GM12878 (cell line): ENCODE measurements at regions of chr1 and their contacts with region 1.

Region 1: GRCh38 chr1:178055779-178056471 is 38.0 kb upstream of the RASAL2 start:
- DNase-seq: peak; percentile 32
- ATAC-seq: peak; percentile 97
- H3K4me3 ChIP-seq: no peak overlapping the region; the same call in 1 of the 2 replicates
- H3K27ac ChIP-seq: 0 out of 2 replicates have a peak overlapping the region, but pooled peaks have one; percentile 38
- H3K4me1 ChIP-seq: peaks cover 9% of the 10 kb centered on the region
- H3K27me3 ChIP-seq: no peaks in the 10 kb centered on the region; a peak in 1 of 4 replicates
- CTCF ChIP-seq: peak; percentile 23 to 27 (median 25); a peak in 3 of 6 replicates
- EP300 ChIP-seq: peak in 1 of 2 experiments; percentile 78; a peak in 1 of 4 replicates
- POLR2A ChIP-seq: no peak
- RAD21 ChIP-seq: no peak

Region 2: GRCh38 chr1:178011465-178011828 is 44.5 kb before region 1 on chr1:
- CTCF ChIA-PET with region 1: no interaction called
- POLR2A ChIA-PET with region 1: no interaction called
- RAD21 ChIA-PET with region 1: no interaction called
- SMC1A ChIA-PET with region 1: no interaction called
- in situ Hi-C with region 1: no loop called
- intact Hi-C with region 1: no loop called
- DNase-seq: no peak
- ATAC-seq: no peak
- H3K4me3 ChIP-seq: no peak overlapping the region
- H3K27ac ChIP-seq: no peak overlapping the region
- H3K4me1 ChIP-seq: no peaks in the 10 kb centered on the region
- H3K27me3 ChIP-seq: no peaks in the 10 kb centered on the region; a peak in 1 of 4 replicates
- CTCF ChIP-seq: no peak
- EP300 ChIP-seq: no peak
- POLR2A ChIP-seq: no peak
- RAD21 ChIP-seq: no peak

Region 3: DNA sequence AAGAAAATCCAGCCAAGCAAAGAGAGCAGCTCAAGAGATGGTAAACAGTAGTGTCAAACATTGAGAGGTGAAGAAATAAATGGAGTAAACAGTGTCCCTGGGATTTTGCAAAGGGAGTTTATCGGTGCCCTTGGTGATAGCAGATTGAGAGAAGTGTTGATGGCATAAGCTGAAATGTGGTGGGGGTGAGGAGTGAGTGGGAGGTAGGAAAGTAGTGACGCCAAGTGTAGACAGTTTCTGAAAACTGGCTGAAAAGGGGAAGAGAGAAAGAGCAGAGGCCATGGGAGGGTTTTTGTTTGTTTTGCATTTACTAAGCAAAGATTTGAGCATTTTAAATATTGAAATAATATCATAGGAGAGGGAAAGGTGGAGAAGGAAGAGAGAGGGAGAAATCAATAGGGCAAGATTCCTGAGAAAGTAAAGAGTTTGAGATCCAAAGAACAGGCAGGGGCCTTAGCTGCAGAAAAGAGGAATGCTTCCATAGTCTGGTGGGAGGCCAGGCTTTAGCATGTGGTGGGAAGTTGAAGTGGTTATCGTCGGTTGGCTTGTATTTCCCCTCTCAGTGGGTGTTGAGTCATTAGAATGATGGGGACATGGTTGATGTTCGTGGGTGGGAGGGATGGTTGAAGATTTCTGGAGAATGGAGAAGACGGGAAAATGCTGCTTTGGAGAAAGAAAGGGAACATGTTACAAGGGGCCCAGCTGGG is 11.1 kb after region 1 on chr1:
- CTCF ChIA-PET with region 1: interaction called, 11 read pairs
- POLR2A ChIA-PET with region 1: interaction called, 4 read pairs
- RAD21 ChIA-PET with region 1: interaction called, 13 read pairs
- SMC1A ChIA-PET with region 1: interaction called, 23 read pairs
- in situ Hi-C with region 1: no loop called
- intact Hi-C with region 1: no loop called
- DNase-seq: peak; percentile 44
- ATAC-seq: peak; percentile 98
- H3K4me3 ChIP-seq: no peak overlapping the region
- H3K27ac ChIP-seq: peak overlapping the region; percentile 67
- H3K4me1 ChIP-seq: peaks cover 6% of the 10 kb centered on the region
- H3K27me3 ChIP-seq: no peaks in the 10 kb centered on the region
- CTCF ChIP-seq: no peak
- EP300 ChIP-seq: peak; percentile 85 to 92
- POLR2A ChIP-seq: no peak
- RAD21 ChIP-seq: no peak

Region 4: DNA sequence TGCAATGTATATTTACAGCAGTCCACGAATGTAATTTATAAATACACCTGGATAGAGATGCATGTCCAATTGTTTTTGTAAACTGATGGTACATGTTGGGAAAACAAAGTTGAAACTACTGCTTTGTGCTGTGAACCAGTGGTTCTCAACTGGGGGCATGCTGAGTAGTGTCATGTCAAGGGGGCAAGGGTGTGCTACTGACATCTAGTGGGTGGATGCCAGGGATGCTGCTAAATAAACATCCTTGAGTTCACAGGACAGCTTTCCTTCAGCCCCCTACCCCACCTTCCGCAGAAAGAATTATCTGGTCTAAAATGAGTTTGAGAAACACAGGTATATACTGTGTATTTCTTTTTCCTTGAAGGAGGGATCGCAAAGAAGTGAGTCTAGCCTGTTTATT is 133.9 kb after region 1 on chr1:
- CTCF ChIA-PET with region 1: interaction called, 54 read pairs
- POLR2A ChIA-PET with region 1: no interaction called
- RAD21 ChIA-PET with region 1: interaction called, 40 read pairs
- SMC1A ChIA-PET with region 1: interaction called, 25 read pairs
- in situ Hi-C with region 1: no loop called
- intact Hi-C with region 1: loop called (anchors 1 kb)
- DNase-seq: peak; percentile 5
- ATAC-seq: peak; percentile 88
- H3K4me3 ChIP-seq: no peak overlapping the region
- H3K27ac ChIP-seq: no peak overlapping the region
- H3K4me1 ChIP-seq: no peaks in the 10 kb centered on the region
- H3K27me3 ChIP-seq: no peaks in the 10 kb centered on the region
- CTCF ChIP-seq: peak; percentile 69 to 82 (median 79)
- EP300 ChIP-seq: no peak
- POLR2A ChIP-seq: no peak
- RAD21 ChIP-seq: peak; percentile 81